ENCODE measurements at regions of chr3 and their contacts with region 1.

Region 1: DNA sequence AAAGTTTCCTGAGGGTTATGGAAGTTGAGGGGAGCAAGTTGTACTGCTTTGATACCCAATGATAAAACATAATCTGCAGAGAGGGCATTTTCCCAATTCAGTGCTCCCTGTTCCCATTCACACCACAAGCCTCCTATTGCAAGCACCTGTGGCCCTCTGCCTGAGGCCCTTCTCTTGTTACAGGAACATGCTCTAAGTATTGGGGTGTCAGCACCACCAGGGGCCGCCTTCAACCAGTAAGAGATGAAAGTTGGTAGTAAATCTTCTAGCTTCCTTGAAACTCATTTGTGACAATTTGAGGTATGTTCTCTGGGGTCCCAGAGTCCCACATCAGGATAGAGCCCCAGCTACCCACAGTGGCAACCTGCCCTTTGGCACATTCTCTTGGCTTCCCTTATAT is 265.4 kb upstream of the ARHGEF26 start:
- DNase-seq: no peak
- ATAC-seq: peak; percentile 88
- H3K4me3 ChIP-seq: no peak overlapping the region
- H3K27ac ChIP-seq: no peak overlapping the region
- H3K4me1 ChIP-seq: no peaks in the 10 kb centered on the region
- H3K27me3 ChIP-seq: no peaks in the 10 kb centered on the region; a peak in 1 of 4 replicates
- CTCF ChIP-seq: peak; percentile 25 to 35 (median 28); a peak in 3 of 6 replicates
- EP300 ChIP-seq: no peak
- POLR2A ChIP-seq: no peak
- RAD21 ChIP-seq: 0 out of 2 replicates have a peak, but pooled peaks have one; percentile 34

Region 2: GRCh38 chr3:153744889-153745288 is 110.9 kb before region 1 on chr3:
- CTCF ChIA-PET with region 1: no interaction called
- POLR2A ChIA-PET with region 1: no interaction called
- RAD21 ChIA-PET with region 1: no interaction called
- SMC1A ChIA-PET with region 1: no interaction called
- in situ Hi-C with region 1: no loop called
- intact Hi-C with region 1: no loop called
- DNase-seq: no peak
- ATAC-seq: no peak
- H3K4me3 ChIP-seq: no peak overlapping the region
- H3K27ac ChIP-seq: no peak overlapping the region
- H3K4me1 ChIP-seq: no peaks in the 10 kb centered on the region
- H3K27me3 ChIP-seq: no peaks in the 10 kb centered on the region
- CTCF ChIP-seq: no peak
- EP300 ChIP-seq: no peak
- POLR2A ChIP-seq: no peak
- RAD21 ChIP-seq: no peak

Region 3: GRCh38 chr3:153897842-153898241 is 42.1 kb after region 1 on chr3:
- CTCF ChIA-PET with region 1: interaction called, 7 read pairs
- POLR2A ChIA-PET with region 1: no interaction called
- RAD21 ChIA-PET with region 1: interaction called, 5 read pairs
- SMC1A ChIA-PET with region 1: interaction called, 13 read pairs
- in situ Hi-C with region 1: no loop called
- intact Hi-C with region 1: loop called (anchors 5 kb)
- DNase-seq: no peak
- ATAC-seq: peak; percentile 82
- H3K4me3 ChIP-seq: no peak overlapping the region
- H3K27ac ChIP-seq: no peak overlapping the region
- H3K4me1 ChIP-seq: no peaks in the 10 kb centered on the region
- H3K27me3 ChIP-seq: no peaks in the 10 kb centered on the region
- CTCF ChIP-seq: no peak
- EP300 ChIP-seq: no peak
- POLR2A ChIP-seq: no peak
- RAD21 ChIP-seq: no peak

Region 4: DNA sequence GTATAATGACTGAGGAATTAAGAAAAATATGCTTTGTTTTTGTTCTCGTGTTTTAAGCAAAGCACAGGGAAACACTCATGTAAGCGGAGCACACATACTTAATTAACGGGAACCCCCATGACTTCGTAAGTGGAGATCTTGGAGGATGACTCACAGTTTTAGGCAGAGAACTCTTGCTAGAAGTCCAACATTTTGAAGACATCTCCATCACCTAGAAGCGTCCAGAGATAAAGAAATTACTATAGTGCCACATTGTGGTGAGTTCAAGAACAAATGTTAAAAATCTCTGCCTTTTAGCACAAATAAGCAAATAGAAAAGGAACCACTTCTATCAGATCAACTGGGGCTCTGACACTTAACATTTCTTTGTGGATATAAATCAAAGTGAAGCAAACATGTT is 71.3 kb after region 1 on chr3:
- CTCF ChIA-PET with region 1: interaction called, 46 read pairs
- POLR2A ChIA-PET with region 1: no interaction called
- RAD21 ChIA-PET with region 1: interaction called, 4 read pairs
- SMC1A ChIA-PET with region 1: interaction called, 27 read pairs
- in situ Hi-C with region 1: no loop called
- intact Hi-C with region 1: loop called (anchors 1 kb)
- DNase-seq: peak; percentile 2
- ATAC-seq: peak; percentile 85
- H3K4me3 ChIP-seq: no peak overlapping the region
- H3K27ac ChIP-seq: no peak overlapping the region
- H3K4me1 ChIP-seq: no peaks in the 10 kb centered on the region
- H3K27me3 ChIP-seq: no peaks in the 10 kb centered on the region
- CTCF ChIP-seq: peak in 1 of 3 experiments; percentile 36; a peak in 2 of 6 replicates
- EP300 ChIP-seq: no peak
- POLR2A ChIP-seq: no peak
- RAD21 ChIP-seq: no peak

Region 5: GRCh38 chr3:153970741-153971347 is 115.1 kb after region 1 on chr3:
- CTCF ChIA-PET with region 1: interaction called, 17 read pairs
- POLR2A ChIA-PET with region 1: no interaction called
- RAD21 ChIA-PET with region 1: interaction called, 6 read pairs
- SMC1A ChIA-PET with region 1: interaction called, 7 read pairs
- in situ Hi-C with region 1: no loop called
- intact Hi-C with region 1: loop called (anchors 1 kb)
- DNase-seq: no peak
- ATAC-seq: peak; percentile 27; the same call in 2 of the 3 replicates
- H3K4me3 ChIP-seq: no peak overlapping the region
- H3K27ac ChIP-seq: no peak overlapping the region
- H3K4me1 ChIP-seq: peaks cover 37% of the 10 kb centered on the region
- H3K27me3 ChIP-seq: no peaks in the 10 kb centered on the region
- CTCF ChIP-seq: peak; percentile 41 to 63 (median 49)
- EP300 ChIP-seq: no peak
- POLR2A ChIP-seq: no peak
- RAD21 ChIP-seq: peak; percentile 60

Region 6: DNA sequence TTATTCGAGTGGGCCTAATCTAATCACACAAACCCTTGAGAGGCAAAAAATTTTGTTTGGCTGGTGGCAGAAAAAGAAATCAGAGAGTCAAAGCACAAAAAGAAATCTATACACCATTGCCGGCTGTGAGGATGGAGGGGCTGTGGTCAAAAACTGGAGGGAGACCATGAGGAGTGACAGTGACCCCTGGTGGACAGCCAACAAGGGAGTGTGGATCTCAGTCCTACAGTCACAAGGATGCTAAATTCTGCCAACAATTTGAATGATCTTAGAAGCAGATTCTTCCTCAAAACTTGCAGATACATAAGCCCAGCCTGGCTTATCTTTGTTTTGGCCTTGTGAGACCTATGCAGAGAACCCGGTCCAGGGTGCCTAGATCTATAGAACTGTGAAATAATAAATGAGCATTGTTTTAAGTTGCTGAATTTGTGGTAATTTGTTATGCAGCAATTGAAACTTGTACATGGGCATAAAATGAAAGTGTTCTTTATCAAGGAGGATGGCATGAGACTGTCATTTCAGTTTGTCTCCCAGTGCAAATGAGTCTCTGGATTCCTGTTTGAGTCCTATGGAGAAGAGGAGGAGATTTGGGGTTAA is 162.4 kb after region 1 on chr3:
- CTCF ChIA-PET with region 1: no interaction called
- POLR2A ChIA-PET with region 1: no interaction called
- RAD21 ChIA-PET with region 1: no interaction called
- SMC1A ChIA-PET with region 1: no interaction called
- in situ Hi-C with region 1: no loop called
- intact Hi-C with region 1: loop called (anchors 5 kb)
- DNase-seq: peak; percentile 11
- ATAC-seq: peak; percentile 92
- H3K4me3 ChIP-seq: no peak overlapping the region
- H3K27ac ChIP-seq: no peak overlapping the region
- H3K4me1 ChIP-seq: no peaks in the 10 kb centered on the region
- H3K27me3 ChIP-seq: no peaks in the 10 kb centered on the region
- CTCF ChIP-seq: peak; percentile 65 to 68 (median 67)
- EP300 ChIP-seq: no peak
- POLR2A ChIP-seq: no peak
- RAD21 ChIP-seq: peak; percentile 50

Region 7: GRCh38 chr3:154112146-154112852 is 256.5 kb after region 1 on chr3:
- CTCF ChIA-PET with region 1: no interaction called
- POLR2A ChIA-PET with region 1: no interaction called
- RAD21 ChIA-PET with region 1: no interaction called
- SMC1A ChIA-PET with region 1: no interaction called
- in situ Hi-C with region 1: no loop called
- intact Hi-C with region 1: no loop called
- DNase-seq: no peak
- ATAC-seq: no peak
- H3K4me3 ChIP-seq: no peak overlapping the region
- H3K27ac ChIP-seq: no peak overlapping the region
- H3K4me1 ChIP-seq: no peaks in the 10 kb centered on the region
- H3K27me3 ChIP-seq: no peaks in the 10 kb centered on the region
- CTCF ChIP-seq: no peak
- EP300 ChIP-seq: no peak
- POLR2A ChIP-seq: no peak
- RAD21 ChIP-seq: no peak